Activated CD8-positive, alpha-beta T cell treated with anti-CD3 and anti-CD28 coated beads for 36 hours (primary cell): ENCODE measurements at regions of chr10 and their contacts with region 1.

Region 1: DNA sequence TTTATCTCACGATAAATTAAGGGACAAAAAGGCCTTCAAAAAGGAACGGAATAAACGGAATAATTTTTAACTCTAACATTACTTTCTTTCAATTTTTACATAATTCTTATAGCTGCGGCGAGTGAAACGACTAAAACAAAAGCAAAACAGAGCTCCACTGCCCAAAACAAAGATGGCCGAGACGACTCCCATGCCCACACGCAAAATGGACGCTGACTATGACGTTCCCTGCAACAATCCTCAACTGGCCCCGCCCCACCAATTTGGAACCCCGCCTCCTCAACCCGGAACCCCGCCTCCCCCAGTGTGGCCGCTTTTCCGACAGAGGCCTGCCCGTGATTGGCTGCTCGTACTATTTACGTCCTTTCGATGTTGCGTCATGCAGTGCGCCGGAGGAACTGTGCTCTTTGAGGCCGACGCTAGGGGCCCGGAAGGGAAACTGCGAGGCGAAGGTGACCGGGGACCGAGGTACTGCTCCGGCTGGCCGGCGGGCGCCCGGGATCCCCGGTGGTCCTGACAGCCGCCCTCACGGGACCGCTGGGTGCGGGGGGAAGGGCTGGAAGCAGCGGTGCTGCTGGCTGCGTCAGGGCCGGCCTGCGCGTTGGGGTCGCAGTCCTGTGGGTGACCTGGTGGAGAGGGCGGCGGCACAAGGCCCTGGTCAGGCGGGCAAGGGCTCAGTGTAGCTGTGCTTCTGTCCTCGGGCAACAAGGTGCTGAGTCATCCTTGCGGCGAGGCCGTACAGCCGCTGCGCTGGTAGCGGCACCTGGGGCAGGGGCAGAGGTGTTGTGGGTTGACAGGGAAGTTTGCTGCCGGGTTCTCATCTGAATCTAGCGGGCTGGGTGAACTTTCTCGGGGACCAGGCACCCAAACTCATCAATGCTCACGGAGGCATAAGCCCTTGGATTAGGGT is at the start of gene GHITM:
- DNase-seq: peak; percentile 100
- ATAC-seq: peak; percentile 96
- H3K4me3 Mint-ChIP-seq: peak within 1 kb of the TSS; percentile 91
- H3K27ac Mint-ChIP-seq: peak within 1 kb of the TSS; percentile 99
- H3K4me1 Mint-ChIP-seq: peaks cover 32% of the 10 kb centered on the region
- H3K27me3 Mint-ChIP-seq: no peaks in the 10 kb centered on the region
- CTCF ChIP-seq: peak; percentile 39
- total RNA-seq, gene GHITM: 198 TPM

Region 2: DNA sequence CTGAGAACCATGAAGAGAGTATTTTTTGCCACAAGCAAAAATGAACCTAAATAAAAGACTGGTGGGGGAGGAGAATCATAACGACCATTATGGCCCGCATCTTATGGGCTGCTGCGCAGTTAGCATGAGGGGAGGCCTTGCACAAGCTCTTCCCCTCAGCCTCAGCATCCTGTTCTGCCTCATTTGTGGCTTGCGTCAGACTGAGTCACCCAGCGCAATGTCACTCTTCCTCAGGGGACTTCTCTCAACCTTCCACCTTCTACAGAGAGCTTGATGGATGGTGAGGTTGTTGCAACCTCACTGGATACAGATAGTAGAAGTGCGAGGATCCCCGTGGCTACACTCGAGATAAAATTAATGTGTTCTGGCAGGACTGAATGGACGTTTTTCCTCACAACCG is 17.4 kb after region 1 on chr10:
- CTCF ChIA-PET with region 1: interaction called, 12 read pairs
- POLR2A ChIA-PET with region 1: interaction called, 5 read pairs
- intact Hi-C with region 1: no loop called
- DNase-seq: peak; percentile 83
- ATAC-seq: peak; percentile 99
- H3K4me3 Mint-ChIP-seq: no peak overlapping the region
- H3K27ac Mint-ChIP-seq: peak overlapping the region; percentile 54
- H3K4me1 Mint-ChIP-seq: peaks cover 48% of the 10 kb centered on the region
- H3K27me3 Mint-ChIP-seq: no peaks in the 10 kb centered on the region
- CTCF ChIP-seq: no peak

Region 3: DNA sequence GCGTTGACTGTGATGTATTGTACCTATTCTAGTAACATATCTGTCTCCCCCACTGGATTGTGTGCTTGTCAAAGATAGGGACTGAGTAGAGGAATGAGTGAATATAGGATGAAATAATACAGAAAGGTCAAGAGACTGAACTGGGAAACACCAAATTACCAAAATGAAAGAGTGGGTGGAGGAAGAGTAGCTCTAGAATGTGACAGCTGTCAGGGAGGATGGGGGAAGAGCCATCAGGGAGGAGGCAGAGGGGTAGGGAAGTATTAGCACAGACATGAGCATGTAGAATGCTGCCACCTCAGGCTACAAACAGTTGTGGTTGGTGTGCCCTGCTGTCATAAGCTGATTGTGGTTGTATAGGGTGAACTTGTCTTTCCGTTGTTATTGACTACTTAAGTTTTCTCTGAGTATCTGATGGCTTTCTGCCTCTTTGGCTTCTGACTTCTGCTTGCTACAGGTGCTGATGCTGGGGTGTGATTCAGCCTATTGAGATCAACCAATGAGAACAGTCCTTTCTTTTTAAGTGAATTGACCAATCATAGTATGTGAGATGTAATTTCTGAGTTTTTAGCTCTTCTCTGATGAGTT is 194.6 kb after region 1 on chr10:
- CTCF ChIA-PET with region 1: no interaction called
- POLR2A ChIA-PET with region 1: interaction called, 3 read pairs
- intact Hi-C with region 1: loop called (anchors 5 kb)
- DNase-seq: peak; percentile 84
- ATAC-seq: peak; percentile 84
- H3K4me3 Mint-ChIP-seq: peak overlapping the region; percentile 64
- H3K27ac Mint-ChIP-seq: peak overlapping the region; percentile 93
- H3K4me1 Mint-ChIP-seq: peaks cover 22% of the 10 kb centered on the region
- H3K27me3 Mint-ChIP-seq: no peaks in the 10 kb centered on the region
- CTCF ChIP-seq: no peak

Region 4: GRCh38 chr10:84348860-84349259 is 209.5 kb after region 1 on chr10:
- CTCF ChIA-PET with region 1: no interaction called
- POLR2A ChIA-PET with region 1: no interaction called
- intact Hi-C with region 1: no loop called
- DNase-seq: no peak
- ATAC-seq: no peak
- H3K4me3 Mint-ChIP-seq: no peak overlapping the region
- H3K27ac Mint-ChIP-seq: no peak overlapping the region
- H3K4me1 Mint-ChIP-seq: peaks cover 51% of the 10 kb centered on the region
- H3K27me3 Mint-ChIP-seq: no peaks in the 10 kb centered on the region
- CTCF ChIP-seq: no peak